Breast epithelium (tissue), 4 donors: ENCODE measurements at regions of chr2 and their contacts with region 1.

Region 1: DNA sequence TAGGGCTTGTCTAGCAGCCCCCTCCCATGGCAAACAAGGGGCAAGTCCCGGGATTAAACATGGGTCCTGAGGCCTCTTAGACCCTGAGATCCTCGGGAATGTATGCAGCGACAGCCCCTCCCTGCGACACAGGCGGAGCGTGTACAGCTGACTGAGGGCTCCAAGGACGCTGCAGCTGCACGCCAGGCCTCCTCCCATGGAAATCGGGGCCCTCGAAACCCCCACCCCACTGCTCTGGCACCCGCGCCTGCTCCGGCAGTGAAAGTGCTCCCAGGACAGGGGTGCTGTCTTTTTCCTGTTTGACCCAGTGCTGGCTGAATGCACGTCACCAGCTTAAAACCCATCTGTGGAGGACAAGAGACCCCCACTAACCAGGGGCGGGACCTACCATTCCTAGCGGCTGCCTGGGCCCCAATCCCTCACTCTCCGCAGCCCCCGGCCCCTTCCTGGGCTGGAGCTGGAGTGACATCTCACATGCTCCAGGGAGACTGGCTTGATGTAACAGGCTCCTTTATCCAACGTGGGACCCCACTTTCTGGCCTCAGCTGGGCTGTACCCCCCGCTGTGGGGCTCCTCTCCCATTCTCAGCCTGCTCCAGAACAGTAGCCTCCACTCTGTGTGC is 247.7 kb downstream of the TWIST2 start:
- DNase-seq: no peak
- H3K4me3 ChIP-seq: no peak overlapping the region
- H3K27ac ChIP-seq: no peak overlapping the region
- H3K4me1 ChIP-seq: no peaks in the 10 kb centered on the region
- H3K27me3 ChIP-seq: no peaks in the 10 kb centered on the region
- CTCF ChIP-seq: no peak
- POLR2A ChIP-seq: no peak

Region 2: DNA sequence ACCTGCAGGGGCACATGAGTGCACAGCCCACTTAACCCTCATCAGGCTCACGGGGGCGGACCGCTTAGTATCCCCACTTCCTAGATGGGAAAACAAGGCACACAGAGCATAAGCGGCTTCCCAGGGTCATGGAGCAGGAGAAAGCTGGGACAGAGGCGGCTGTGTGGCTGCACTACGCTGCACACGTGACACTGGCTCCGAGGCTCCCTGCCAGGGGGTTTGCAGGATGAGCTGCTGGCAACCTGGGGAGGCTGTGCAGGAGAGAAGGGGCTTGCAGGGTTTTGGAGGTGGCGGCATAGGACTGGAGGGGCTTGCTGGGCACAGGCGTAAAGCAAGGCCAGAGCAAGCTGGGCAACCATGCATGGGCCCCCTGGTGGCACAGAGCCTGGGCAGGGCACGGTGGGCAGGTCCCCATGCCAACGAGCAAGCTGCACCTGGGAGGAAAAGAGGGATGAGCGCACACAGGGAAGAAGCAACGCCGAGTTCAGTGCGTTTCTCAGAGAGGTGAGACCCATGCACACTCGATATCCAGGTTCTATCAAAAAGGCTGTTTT is 36.7 kb after region 1 on chr2:
- intact Hi-C with region 1: loop called (anchors 1 kb)
- DNase-seq: no peak
- H3K4me3 ChIP-seq: no peak overlapping the region
- H3K27ac ChIP-seq: no peak overlapping the region
- H3K4me1 ChIP-seq: no peaks in the 10 kb centered on the region
- H3K27me3 ChIP-seq: no peaks in the 10 kb centered on the region
- CTCF ChIP-seq: no peak
- POLR2A ChIP-seq: no peak